ENCODE measurements at regions of chr2 and their contacts with region 1.

Region 1: DNA sequence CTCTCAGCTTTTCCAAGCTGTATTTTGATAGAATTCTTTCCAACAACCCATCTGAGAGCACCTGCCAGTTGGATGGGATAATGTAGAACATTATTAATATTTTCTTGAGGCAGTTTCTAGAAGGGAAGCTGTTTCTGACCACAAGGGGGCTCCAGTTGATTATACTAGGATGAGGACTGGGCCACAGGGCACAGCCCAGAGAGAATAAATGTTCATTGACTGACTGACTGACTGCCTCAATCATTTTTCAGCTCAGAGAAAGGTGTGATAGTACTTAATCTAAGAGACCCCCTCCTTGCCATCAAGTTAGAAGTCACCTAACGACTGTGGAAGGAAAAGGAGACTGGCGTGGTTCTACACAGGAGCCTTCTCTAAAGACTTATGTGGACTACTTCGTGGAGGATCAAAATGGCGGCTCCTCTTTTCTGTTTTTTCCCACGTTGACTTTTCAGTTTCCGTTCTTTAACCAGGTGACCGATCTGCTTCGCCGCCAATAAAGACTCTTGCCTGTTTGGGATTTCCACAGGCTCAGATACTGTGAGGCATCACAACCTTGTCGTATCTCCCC is 31.9 kb upstream of the CREG2 start:
- DNase-seq: peak; percentile 48
- H3K4me3 ChIP-seq: no peak overlapping the region
- H3K27ac ChIP-seq: no peak overlapping the region
- H3K4me1 ChIP-seq: no peaks in the 10 kb centered on the region
- H3K27me3 ChIP-seq: no peaks in the 10 kb centered on the region
- CTCF ChIP-seq: peak; percentile 32 to 73 (median 64)
- POLR2A ChIP-seq: no peak

Region 2: DNA sequence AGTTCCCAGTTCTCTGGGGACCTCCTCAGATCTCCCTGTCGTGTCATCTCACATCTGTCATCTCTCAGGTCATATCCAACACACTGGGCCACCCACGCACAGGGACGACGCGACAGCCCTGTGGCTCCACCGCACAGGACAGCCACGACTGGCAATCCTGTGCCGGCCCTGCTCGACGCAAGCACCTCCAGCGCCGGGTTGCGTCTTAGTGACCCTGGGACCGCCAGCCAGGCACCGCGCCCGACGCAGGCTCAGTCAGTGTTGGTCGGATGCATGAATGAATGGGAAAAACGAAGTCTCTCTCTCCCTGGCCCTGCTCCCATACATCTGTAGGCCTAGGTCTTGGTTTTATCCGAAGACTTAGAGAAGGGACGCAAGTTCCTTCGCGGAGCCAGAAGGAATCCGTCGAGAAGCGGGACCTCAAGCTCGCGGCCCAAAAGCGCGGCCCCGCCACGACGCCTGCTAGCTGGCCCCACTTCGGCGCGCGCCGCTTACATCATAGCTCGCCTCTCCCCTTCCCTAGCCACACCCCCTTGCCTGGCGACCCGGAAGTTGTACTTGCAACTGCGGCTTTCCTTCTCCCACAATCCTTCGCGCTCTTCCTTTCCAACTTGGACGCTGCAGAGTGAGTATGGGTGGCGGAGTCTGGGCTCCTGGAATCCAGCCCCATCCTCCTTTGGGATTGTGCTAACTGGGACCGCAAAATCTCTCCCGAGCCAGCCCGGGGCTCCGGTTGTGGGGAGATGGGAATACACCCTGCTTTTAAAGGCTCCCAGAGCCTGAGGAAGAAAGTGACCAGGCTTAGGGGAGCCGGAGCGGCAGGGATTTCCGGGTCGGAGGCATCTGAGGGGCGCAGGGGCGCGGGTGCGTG is 417.3 kb before region 1 on chr2 and contains the start of gene RPL31:
- intact Hi-C with region 1: no loop called
- DNase-seq: peak; percentile 96
- H3K4me3 ChIP-seq: peak within 1 kb of the TSS; percentile 55 to 73
- H3K27ac ChIP-seq: peak within 1 kb of the TSS; percentile 77 to 81
- H3K4me1 ChIP-seq: peaks cover 2% of the 10 kb centered on the region
- H3K27me3 ChIP-seq: no peaks in the 10 kb centered on the region
- CTCF ChIP-seq: no peak
- POLR2A ChIP-seq: peak; percentile 84
- total RNA-seq, gene RPL31: 797 to 1,305 TPM

Region 3: DNA sequence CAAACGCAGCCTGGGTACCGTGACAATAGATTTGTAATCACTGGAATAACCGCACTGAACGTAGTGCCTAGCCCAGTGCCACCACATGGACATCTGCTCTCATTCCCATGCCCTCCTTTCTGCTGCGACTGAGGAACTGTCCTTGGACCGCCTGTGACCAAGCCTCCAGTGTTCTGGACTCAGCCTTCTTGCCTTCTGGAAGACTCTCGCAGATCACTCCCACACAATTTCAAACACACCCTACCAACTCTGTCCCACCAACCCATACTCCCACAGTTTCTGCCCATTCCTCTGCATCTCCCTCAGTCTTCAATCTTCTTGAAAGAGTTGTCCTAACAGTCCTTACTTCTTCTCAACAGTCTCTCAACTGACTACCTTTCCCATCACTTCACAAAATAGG is 112.8 kb before region 1 on chr2:
- intact Hi-C with region 1: no loop called
- DNase-seq: no peak
- H3K4me3 ChIP-seq: peak overlapping the region; percentile 96 to 99
- H3K27ac ChIP-seq: peak overlapping the region; percentile 87 to 91
- H3K4me1 ChIP-seq: peaks cover 17% of the 10 kb centered on the region
- H3K27me3 ChIP-seq: no peaks in the 10 kb centered on the region
- CTCF ChIP-seq: no peak
- POLR2A ChIP-seq: no peak

Region 4: GRCh38 chr2:101518578-101519492 is 99.7 kb after region 1 on chr2:
- intact Hi-C with region 1: loop called (anchors 5 kb)
- DNase-seq: peak; percentile 43
- H3K4me3 ChIP-seq: no peak overlapping the region
- H3K27ac ChIP-seq: no peak overlapping the region
- H3K4me1 ChIP-seq: no peaks in the 10 kb centered on the region
- H3K27me3 ChIP-seq: no peaks in the 10 kb centered on the region
- CTCF ChIP-seq: peak; percentile 22 to 38 (median 33)
- POLR2A ChIP-seq: no peak

Region 5: GRCh38 chr2:101638181-101638711 is 219.1 kb after region 1 on chr2:
- intact Hi-C with region 1: no loop called
- DNase-seq: no peak
- H3K4me3 ChIP-seq: no peak overlapping the region
- H3K27ac ChIP-seq: no peak overlapping the region
- H3K4me1 ChIP-seq: no peaks in the 10 kb centered on the region
- H3K27me3 ChIP-seq: no peaks in the 10 kb centered on the region
- CTCF ChIP-seq: no peak
- POLR2A ChIP-seq: no peak